ENCODE measurements at regions of chr3 and their contacts with region 1.

Region 1: GRCh38 chr3:31908391-31909097 is 72.5 kb downstream of the OSBPL10 start:
- DNase-seq: no peak
- ATAC-seq: peak; percentile 37
- H3K4me3 Mint-ChIP-seq: no peak overlapping the region
- H3K27ac Mint-ChIP-seq: peak overlapping the region; percentile 65
- H3K4me1 Mint-ChIP-seq: peaks cover 84% of the 10 kb centered on the region
- H3K27me3 Mint-ChIP-seq: no peaks in the 10 kb centered on the region
- CTCF ChIP-seq: no peak

Region 2: GRCh38 chr3:31858439-31858838 is 50.1 kb before region 1 on chr3:
- CTCF ChIA-PET with region 1: no interaction called
- POLR2A ChIA-PET with region 1: no interaction called
- intact Hi-C with region 1: loop called (anchors 5 kb)
- DNase-seq: no peak
- ATAC-seq: peak; percentile 69
- H3K4me3 Mint-ChIP-seq: no peak overlapping the region
- H3K27ac Mint-ChIP-seq: peak overlapping the region; percentile 71
- H3K4me1 Mint-ChIP-seq: peaks cover 74% of the 10 kb centered on the region
- H3K27me3 Mint-ChIP-seq: no peaks in the 10 kb centered on the region
- CTCF ChIP-seq: no peak

Region 3: DNA sequence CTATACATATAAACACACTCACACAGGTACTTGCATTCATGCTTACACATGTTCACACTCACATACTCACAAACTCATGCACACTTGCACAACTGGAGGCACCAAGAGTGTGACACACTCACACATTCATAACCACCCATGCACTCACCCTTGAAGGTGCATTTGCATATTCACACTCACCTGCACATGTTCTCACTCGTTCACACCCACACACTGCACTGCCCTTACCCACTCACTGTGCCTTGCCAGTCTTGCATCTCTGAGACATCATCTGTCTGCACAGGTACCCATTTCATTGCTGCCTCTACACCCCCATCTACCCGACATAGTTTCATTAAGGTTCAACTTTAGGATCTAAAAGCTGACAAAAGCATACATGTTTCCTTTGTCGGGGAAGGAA is 23.3 kb before region 1 on chr3:
- CTCF ChIA-PET with region 1: interaction called, 3 read pairs
- POLR2A ChIA-PET with region 1: interaction called, 11 read pairs
- intact Hi-C with region 1: loop called (anchors 2 kb)
- DNase-seq: no peak
- ATAC-seq: peak; percentile 47
- H3K4me3 Mint-ChIP-seq: peak overlapping the region; percentile 21
- H3K27ac Mint-ChIP-seq: peak overlapping the region; percentile 55
- H3K4me1 Mint-ChIP-seq: peaks cover 92% of the 10 kb centered on the region
- H3K27me3 Mint-ChIP-seq: no peaks in the 10 kb centered on the region
- CTCF ChIP-seq: no peak

Region 4: GRCh38 chr3:31891974-31892373 is 16.6 kb before region 1 on chr3:
- CTCF ChIA-PET with region 1: interaction called, 3 read pairs
- POLR2A ChIA-PET with region 1: no interaction called
- intact Hi-C with region 1: loop called (anchors 2 kb)
- DNase-seq: no peak
- ATAC-seq: no peak
- H3K4me3 Mint-ChIP-seq: no peak overlapping the region
- H3K27ac Mint-ChIP-seq: peak overlapping the region; percentile 13
- H3K4me1 Mint-ChIP-seq: peaks cover 86% of the 10 kb centered on the region
- H3K27me3 Mint-ChIP-seq: no peaks in the 10 kb centered on the region
- CTCF ChIP-seq: no peak

Region 5: GRCh38 chr3:31925271-31925630 is 16.7 kb after region 1 on chr3:
- CTCF ChIA-PET with region 1: interaction called, 3 read pairs
- POLR2A ChIA-PET with region 1: no interaction called
- intact Hi-C with region 1: loop called (anchors 2 kb)
- DNase-seq: no peak
- ATAC-seq: peak; percentile 51
- H3K4me3 Mint-ChIP-seq: peak overlapping the region; percentile 36
- H3K27ac Mint-ChIP-seq: peak overlapping the region; percentile 84
- H3K4me1 Mint-ChIP-seq: peaks cover 84% of the 10 kb centered on the region
- H3K27me3 Mint-ChIP-seq: no peaks in the 10 kb centered on the region
- CTCF ChIP-seq: no peak

Measured in activated B cell treated with CpG ODN at 0.5 μM for 24 hours (primary cell).